A549 (cell line): ENCODE measurements at regions of chr12 and their contacts with region 1.

Region 1: GRCh38 chr12:52924764-52925716 is 20.2 kb upstream of the KRT8 start:
- DNase-seq: peak; percentile 85 to 94
- ATAC-seq: peak; percentile 57 to 80
- H3K4me3 ChIP-seq: peak overlapping the region; percentile 27; the same call in 2 of the 3 replicates
- H3K27ac ChIP-seq: peak overlapping the region; percentile 96 to 97
- H3K4me1 ChIP-seq: peaks cover 85% of the 10 kb centered on the region
- CTCF ChIP-seq: no peak
- EP300 ChIP-seq: peak; percentile 62 to 90; a peak in 4 of 5 replicates
- POLR2A ChIP-seq: no peak
- RAD21 ChIP-seq: peak in 1 of 2 experiments; percentile 32; a peak in 2 of 5 replicates

Region 2: DNA sequence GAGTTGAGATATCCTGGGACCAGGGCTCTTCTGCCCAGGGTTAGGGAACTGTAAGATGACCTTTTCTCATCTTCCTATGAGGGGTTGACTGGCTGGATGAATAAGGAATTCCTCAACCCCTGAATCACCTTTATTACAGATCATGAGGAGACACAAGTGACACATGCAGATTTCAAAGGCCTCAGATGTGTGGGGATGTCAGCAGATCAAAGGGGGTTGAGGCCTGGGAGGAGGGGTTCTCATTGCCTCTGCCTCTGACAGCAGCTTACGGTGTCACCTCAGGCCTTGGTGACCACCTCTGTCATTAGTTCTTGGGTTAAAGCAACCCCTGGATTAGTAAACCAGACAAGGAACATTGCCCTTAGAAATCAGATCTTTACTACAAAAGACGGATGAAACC is 321.7 kb before region 1 on chr12:
- CTCF ChIA-PET with region 1: no interaction called
- POLR2A ChIA-PET with region 1: no interaction called
- DNase-seq: no peak
- ATAC-seq: no peak
- H3K4me3 ChIP-seq: no peak overlapping the region
- H3K27ac ChIP-seq: no peak overlapping the region
- H3K4me1 ChIP-seq: no peaks in the 10 kb centered on the region
- CTCF ChIP-seq: no peak
- EP300 ChIP-seq: no peak
- POLR2A ChIP-seq: no peak
- RAD21 ChIP-seq: no peak

Region 3: DNA sequence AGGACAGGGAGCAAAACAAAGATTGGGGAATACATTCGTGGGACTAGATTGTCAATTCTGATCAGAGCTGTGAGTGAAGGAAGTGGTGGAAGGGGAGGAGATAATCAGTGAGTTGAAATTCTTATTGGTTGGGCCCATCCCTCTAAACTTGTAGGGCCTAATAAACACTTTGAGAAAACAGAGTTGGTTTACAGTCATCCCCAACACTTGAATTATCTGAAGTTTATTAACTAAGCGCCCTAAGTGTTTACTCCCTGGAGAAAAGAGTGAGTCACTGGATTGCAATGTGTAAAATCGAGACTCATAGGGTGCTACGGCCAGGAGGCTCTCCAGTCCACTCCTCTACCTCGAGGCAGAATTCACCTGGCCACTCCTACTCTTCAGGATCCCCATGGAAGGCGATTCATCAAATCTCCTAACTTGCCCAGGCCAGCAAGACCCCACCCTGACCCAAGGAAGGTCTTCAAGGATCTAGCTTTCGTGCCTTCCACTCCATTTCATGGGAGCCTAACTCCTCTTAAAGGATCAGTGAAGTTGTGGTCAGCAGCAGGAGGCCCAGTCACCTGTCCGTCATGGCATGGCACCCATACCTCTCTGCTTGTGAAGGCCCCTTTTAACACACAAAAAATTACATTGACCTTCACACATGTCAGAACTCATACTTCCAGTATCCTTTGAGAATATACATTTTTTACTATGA is 125.8 kb before region 1 on chr12:
- CTCF ChIA-PET with region 1: no interaction called
- POLR2A ChIA-PET with region 1: no interaction called
- DNase-seq: peak; percentile 40 to 75
- ATAC-seq: peak; percentile 32 to 47; a peak in 3 of 6 replicates
- H3K4me3 ChIP-seq: no peak overlapping the region
- H3K27ac ChIP-seq: peak overlapping the region; percentile 88 to 89
- H3K4me1 ChIP-seq: peaks cover 70% of the 10 kb centered on the region
- CTCF ChIP-seq: no peak
- EP300 ChIP-seq: no peak
- POLR2A ChIP-seq: no peak
- RAD21 ChIP-seq: no peak

Region 4: DNA sequence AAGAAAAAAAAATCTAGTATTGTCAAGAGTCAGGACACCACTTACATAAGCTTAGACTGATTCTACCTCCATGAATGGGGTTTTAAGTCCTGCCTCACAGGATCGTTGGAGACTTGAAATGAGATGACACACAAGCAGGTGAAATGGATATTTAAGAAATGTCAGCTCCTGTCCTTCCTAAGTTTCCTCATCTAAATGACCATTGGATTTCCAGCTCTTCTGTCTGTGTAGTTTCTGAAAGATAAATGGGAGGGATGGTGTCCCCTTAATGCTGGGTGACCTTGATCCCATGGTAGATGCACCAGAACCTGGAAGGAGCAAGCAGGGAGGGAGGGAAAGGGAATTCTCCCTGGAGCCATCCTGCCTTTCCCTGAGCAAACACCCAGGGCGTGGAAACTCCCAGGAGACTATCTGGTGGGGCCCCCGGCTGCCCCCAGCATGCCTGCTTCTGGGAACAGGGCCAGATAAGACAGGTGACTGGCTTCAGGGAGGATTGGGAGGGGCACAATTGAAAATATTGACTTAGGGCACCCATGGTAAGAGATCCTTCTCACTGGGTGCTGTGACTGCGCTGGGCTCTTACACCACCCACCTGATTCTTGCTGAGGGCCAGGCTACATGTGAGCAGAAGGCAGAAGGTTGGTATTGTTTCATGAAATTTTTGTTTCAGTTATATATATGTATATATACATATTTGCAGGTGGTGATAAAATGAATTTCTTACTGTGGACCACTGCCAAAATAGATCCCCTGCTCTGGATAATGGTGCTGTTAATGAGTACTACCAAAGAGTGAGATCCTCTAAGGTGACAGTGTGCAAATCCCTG is 29.8 kb before region 1 on chr12:
- CTCF ChIA-PET with region 1: interaction called, 11 read pairs
- POLR2A ChIA-PET with region 1: interaction called, 54 read pairs
- DNase-seq: peak; percentile 85 to 98
- ATAC-seq: peak; percentile 66 to 71
- H3K4me3 ChIP-seq: 0 out of 3 replicates have a peak overlapping the region, but pooled peaks have one; percentile 7
- H3K27ac ChIP-seq: peak overlapping the region; percentile 78 to 91
- H3K4me1 ChIP-seq: peaks cover 59% of the 10 kb centered on the region
- CTCF ChIP-seq: no peak
- EP300 ChIP-seq: peak; percentile 76 to 84; a peak in 2 of 5 replicates
- POLR2A ChIP-seq: no peak
- RAD21 ChIP-seq: 0 out of 5 replicates have a peak, but pooled peaks of 1 of the 2 experiments have one; percentile 27

Region 5: DNA sequence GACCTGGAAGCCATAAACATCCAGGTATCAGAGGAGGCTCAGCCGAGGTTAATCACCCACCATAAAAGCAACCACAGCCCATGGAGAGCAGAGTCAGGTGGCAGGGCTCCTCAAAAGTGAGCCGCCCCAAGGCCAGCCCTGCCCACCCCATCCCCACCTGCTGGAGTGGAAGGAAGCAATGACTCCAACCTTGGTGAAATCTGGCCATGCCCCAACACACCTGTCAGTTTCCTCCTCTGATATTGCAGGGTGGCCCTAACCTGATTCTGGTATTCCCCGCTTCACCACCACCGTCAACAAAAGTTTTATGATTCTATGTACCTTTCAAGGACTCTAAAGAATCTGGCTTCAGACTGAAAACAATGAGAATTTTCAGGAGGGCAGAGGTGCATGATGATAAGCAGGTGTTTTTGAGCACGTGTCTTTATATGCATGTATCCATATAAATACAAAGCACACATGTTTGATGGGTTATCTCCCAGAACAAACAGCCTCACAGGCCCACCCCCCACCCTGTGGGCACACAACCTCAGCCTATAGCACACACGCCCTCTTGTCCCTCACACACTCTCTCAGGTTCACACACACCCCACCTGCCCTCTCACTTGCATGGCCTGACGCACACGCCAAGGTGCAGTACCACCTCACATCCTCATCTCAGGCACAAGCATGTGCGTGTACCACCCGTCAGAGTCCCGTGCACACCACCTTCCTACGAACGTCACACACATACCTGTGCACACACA is 11.8 kb before region 1 on chr12:
- CTCF ChIA-PET with region 1: interaction called, 126 read pairs
- POLR2A ChIA-PET with region 1: interaction called, 12 read pairs
- DNase-seq: no peak
- ATAC-seq: no peak
- H3K4me3 ChIP-seq: no peak overlapping the region
- H3K27ac ChIP-seq: peak overlapping the region in 1 of 2 experiments; percentile 68; a peak in 3 of 6 replicates
- H3K4me1 ChIP-seq: peaks cover 14% of the 10 kb centered on the region
- CTCF ChIP-seq: no peak
- EP300 ChIP-seq: no peak
- POLR2A ChIP-seq: no peak
- RAD21 ChIP-seq: no peak

Region 6: GRCh38 chr12:52949413-52950331 is 24.6 kb after region 1 on chr12:
- CTCF ChIA-PET with region 1: interaction called, 42 read pairs
- POLR2A ChIA-PET with region 1: interaction called, 79 read pairs
- DNase-seq: peak; percentile 87 to 95
- ATAC-seq: peak; percentile 75 to 82
- H3K4me3 ChIP-seq: peak overlapping the region; percentile 91
- H3K27ac ChIP-seq: peak overlapping the region; percentile 96 to 97
- H3K4me1 ChIP-seq: peaks cover 66% of the 10 kb centered on the region
- CTCF ChIP-seq: no peak
- EP300 ChIP-seq: 0 out of 5 replicates have a peak, but pooled peaks of 1 of the 2 experiments have one; percentile 16
- POLR2A ChIP-seq: peak; percentile 49
- RAD21 ChIP-seq: no peak

Region 7: DNA sequence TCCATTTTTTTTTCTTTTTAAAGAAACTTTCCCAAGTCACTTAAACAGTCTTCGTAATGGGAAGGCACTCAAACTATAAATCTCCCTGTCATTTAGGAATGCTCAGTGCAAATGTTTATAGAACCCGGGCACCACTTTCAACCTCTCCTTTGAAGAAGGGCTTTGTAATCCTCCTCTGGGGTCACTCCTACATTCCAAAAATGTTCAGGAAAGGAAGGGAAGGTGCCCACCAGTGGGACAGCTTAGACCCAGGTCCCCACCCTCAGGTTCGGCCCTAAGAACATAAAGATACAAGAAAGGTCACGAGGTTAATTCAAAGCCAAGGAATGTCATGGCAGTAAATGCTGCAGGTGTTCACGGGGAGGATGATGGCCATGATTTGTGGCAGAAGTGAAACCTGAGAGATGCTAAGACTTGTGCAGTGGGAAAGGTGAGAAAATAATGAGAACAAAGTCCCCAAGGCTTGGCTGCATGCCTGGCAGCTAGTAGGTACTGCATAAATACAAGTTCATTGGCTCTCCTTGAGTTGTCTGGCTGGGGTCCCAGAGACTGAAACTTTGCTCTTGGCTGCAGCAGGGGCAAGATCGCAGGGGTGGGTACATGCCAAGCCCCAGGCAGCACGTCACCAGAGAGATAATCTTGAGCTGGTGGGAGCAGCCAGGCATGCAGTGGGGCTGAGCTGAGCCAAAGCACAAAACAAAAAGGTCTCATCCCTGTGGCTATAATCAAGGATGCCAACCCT is 45.0 kb after region 1 on chr12:
- CTCF ChIA-PET with region 1: interaction called, 6 read pairs
- POLR2A ChIA-PET with region 1: interaction called, 30 read pairs
- DNase-seq: peak in 1 of 2 experiments; percentile 96
- ATAC-seq: peak; percentile 39 to 67
- H3K4me3 ChIP-seq: 0 out of 3 replicates have a peak overlapping the region, but pooled peaks have one; percentile 3
- H3K27ac ChIP-seq: peak overlapping the region; percentile 90 to 91
- H3K4me1 ChIP-seq: peaks cover 72% of the 10 kb centered on the region
- CTCF ChIP-seq: no peak
- EP300 ChIP-seq: peak; percentile 72 to 91; a peak in 4 of 5 replicates
- POLR2A ChIP-seq: no peak
- RAD21 ChIP-seq: 0 out of 5 replicates have a peak, but pooled peaks of 1 of the 2 experiments have one; percentile 1